Endothelial cell of umbilical vein (primary cell): ENCODE measurements at regions of chr3 and their contacts with region 1.

Region 1: GRCh38 chr3:102180291-102181039 is 254.3 kb upstream of the ZPLD1 start:
- DNase-seq: peak; percentile 94
- H3K4me3 ChIP-seq: peak overlapping the region in 1 of 3 experiments; percentile 7
- H3K27ac ChIP-seq: peak overlapping the region; percentile 97
- H3K4me1 ChIP-seq: peaks cover 64% of the 10 kb centered on the region
- H3K27me3 ChIP-seq: peaks cover 0 to 4% of the 10 kb centered on the region in 2 experiments
- CTCF ChIP-seq: no peak
- POLR2A ChIP-seq: no peak

Region 2: GRCh38 chr3:101809178-101810021 is 371.1 kb before region 1 on chr3:
- CTCF ChIA-PET with region 1: interaction called, 7 read pairs
- POLR2A ChIA-PET with region 1: no interaction called
- dilution Hi-C with region 1: no loop called
- intact Hi-C with region 1: loop called (anchors 1 kb)
- DNase-seq: peak; percentile 69
- H3K4me3 ChIP-seq: no peak overlapping the region
- H3K27ac ChIP-seq: peak overlapping the region; percentile 60
- H3K4me1 ChIP-seq: peaks cover 14% of the 10 kb centered on the region
- H3K27me3 ChIP-seq: no peaks in the 10 kb centered on the region
- CTCF ChIP-seq: peak; percentile 51 to 59
- POLR2A ChIP-seq: no peak

Region 3: GRCh38 chr3:101849051-101849720 is 331.3 kb before region 1 on chr3 and contains the start of gene NFKBIZ:
- CTCF ChIA-PET with region 1: interaction called, 10 read pairs
- POLR2A ChIA-PET with region 1: interaction called, 22 read pairs
- dilution Hi-C with region 1: no loop called
- intact Hi-C with region 1: loop called (anchors 1 kb)
- DNase-seq: peak; percentile 94
- H3K4me3 ChIP-seq: peak within 1 kb of the TSS; percentile 88 to 99 (median 90)
- H3K27ac ChIP-seq: peak within 1 kb of the TSS; percentile 88
- H3K4me1 ChIP-seq: peaks cover 17% of the 10 kb centered on the region
- H3K27me3 ChIP-seq: no peaks in the 10 kb centered on the region
- CTCF ChIP-seq: no peak
- POLR2A ChIP-seq: peak; percentile 99
- total RNA-seq, gene NFKBIZ: 27.4 and 28.9 TPM in 2 replicates

Region 4: GRCh38 chr3:102084006-102084405 is 96.5 kb before region 1 on chr3:
- CTCF ChIA-PET with region 1: no interaction called
- POLR2A ChIA-PET with region 1: no interaction called
- dilution Hi-C with region 1: no loop called
- intact Hi-C with region 1: loop called (anchors 5 kb)
- DNase-seq: no peak
- H3K4me3 ChIP-seq: no peak overlapping the region
- H3K27ac ChIP-seq: no peak overlapping the region
- H3K4me1 ChIP-seq: peaks cover 24% of the 10 kb centered on the region
- H3K27me3 ChIP-seq: no peaks in the 10 kb centered on the region
- CTCF ChIP-seq: no peak
- POLR2A ChIP-seq: no peak

Region 5: DNA sequence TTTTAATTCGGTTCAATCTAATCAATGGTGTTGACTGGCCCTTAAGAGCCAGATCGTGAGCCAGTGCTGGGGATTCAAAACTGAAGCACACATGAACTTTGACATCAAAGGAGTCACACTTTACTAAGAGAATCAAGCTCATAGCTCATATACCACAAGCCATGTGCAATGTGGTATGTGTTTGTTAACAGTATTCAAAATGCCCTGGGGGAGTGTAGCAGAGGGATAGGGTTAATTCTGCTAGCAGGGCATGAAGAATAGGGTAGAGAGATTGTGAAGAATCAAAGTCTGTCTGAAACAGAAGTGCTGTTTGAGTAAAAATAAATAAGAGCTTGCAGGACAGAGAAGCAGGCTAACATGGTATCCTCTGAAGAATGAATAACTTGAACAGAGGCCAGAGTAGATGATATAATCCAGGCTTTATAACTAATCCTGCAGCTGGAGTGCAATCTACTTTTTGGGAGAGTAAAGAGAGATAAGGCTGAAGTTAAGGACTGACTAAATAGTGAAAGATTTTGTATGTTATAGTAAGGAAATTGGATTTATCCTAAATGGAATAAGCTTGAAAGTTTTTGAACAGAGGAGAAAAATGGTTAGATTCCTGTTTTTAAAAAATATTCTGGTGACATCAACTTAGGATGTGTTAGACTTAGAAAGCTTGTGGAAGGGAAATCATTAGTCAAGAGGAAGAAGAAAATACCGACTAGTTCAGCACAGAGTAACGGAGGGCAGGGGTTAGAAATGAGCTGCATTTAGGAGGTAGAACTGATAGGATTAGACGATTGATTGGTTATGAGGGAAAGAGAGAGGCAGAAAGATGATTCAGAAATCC is 39.2 kb before region 1 on chr3:
- CTCF ChIA-PET with region 1: interaction called, 6 read pairs
- POLR2A ChIA-PET with region 1: no interaction called
- dilution Hi-C with region 1: no loop called
- intact Hi-C with region 1: loop called (anchors 1 kb)
- DNase-seq: peak; percentile 76
- H3K4me3 ChIP-seq: no peak overlapping the region
- H3K27ac ChIP-seq: peak overlapping the region; percentile 62
- H3K4me1 ChIP-seq: peaks cover 20% of the 10 kb centered on the region
- H3K27me3 ChIP-seq: no peaks in the 10 kb centered on the region
- CTCF ChIP-seq: no peak
- POLR2A ChIP-seq: no peak

Region 6: DNA sequence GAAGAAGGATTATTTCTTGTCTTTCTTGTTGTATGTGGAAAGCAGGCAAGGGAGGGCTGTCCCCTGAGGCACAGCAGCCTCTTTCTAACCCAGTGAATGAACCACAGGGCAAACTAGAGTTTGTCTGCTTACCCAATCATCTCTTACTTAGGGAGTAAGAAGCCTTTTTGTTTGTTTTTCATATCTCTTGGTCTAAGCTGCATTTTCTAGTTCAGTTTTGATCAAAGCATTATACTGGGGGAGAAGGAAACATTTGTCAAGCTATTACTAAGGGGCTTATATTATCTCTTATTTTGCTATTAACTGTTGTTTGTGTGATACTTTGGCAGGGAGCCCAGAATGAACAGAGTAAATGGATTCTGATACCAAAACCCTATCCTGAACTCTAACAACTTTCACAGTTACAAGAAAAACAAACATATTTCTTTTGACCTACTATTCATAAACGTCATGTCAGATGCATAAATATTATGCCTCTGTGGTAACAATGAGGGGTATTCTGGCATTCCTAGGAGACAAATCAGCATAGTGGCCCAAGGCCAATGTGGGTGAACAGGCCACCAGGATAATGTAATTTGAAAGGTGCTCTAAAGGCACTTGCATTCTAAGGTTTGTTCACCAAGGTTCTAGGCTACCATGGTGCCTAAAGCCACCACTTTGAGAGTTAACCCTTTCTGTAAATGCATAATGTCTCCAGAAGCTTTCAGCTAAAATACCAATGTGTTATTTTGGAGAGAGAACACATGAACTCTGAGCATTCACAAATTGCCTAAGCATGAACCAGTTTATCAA is 17.2 kb before region 1 on chr3:
- CTCF ChIA-PET with region 1: interaction called, 12 read pairs
- POLR2A ChIA-PET with region 1: interaction called, 6 read pairs
- dilution Hi-C with region 1: no loop called
- intact Hi-C with region 1: loop called (anchors 1 kb)
- DNase-seq: peak; percentile 98
- H3K4me3 ChIP-seq: no peak overlapping the region
- H3K27ac ChIP-seq: peak overlapping the region; percentile 94
- H3K4me1 ChIP-seq: peaks cover 28% of the 10 kb centered on the region
- H3K27me3 ChIP-seq: no peaks in the 10 kb centered on the region
- CTCF ChIP-seq: no peak
- POLR2A ChIP-seq: no peak

Region 7: GRCh38 chr3:102354818-102355515 is 174.5 kb after region 1 on chr3:
- CTCF ChIA-PET with region 1: no interaction called
- POLR2A ChIA-PET with region 1: no interaction called
- dilution Hi-C with region 1: no loop called
- intact Hi-C with region 1: no loop called
- DNase-seq: peak; percentile 51
- H3K4me3 ChIP-seq: no peak overlapping the region
- H3K27ac ChIP-seq: no peak overlapping the region
- H3K4me1 ChIP-seq: no peaks in the 10 kb centered on the region
- H3K27me3 ChIP-seq: peaks cover under 1 to 2% of the 10 kb centered on the region in 2 experiments
- CTCF ChIP-seq: no peak
- POLR2A ChIP-seq: no peak

Region 8: GRCh38 chr3:103712320-103713008 is 1532.0 kb after region 1 on chr3:
- CTCF ChIA-PET with region 1: no interaction called
- POLR2A ChIA-PET with region 1: no interaction called
- dilution Hi-C with region 1: no loop called
- intact Hi-C with region 1: no loop called
- DNase-seq: peak; percentile 69
- H3K4me3 ChIP-seq: no peak overlapping the region
- H3K27ac ChIP-seq: peak overlapping the region; percentile 39
- H3K4me1 ChIP-seq: peaks cover 5% of the 10 kb centered on the region
- H3K27me3 ChIP-seq: no peaks in the 10 kb centered on the region
- CTCF ChIP-seq: no peak
- POLR2A ChIP-seq: no peak